GM18951 (cell line): ENCODE measurements at regions of chr5 and their contacts with region 1.

Region 1: GRCh38 chr5:159156426-159157238 is 52.7 kb downstream of the RNF145 start:
- POLR2A ChIP-seq: no peak

Region 2: DNA sequence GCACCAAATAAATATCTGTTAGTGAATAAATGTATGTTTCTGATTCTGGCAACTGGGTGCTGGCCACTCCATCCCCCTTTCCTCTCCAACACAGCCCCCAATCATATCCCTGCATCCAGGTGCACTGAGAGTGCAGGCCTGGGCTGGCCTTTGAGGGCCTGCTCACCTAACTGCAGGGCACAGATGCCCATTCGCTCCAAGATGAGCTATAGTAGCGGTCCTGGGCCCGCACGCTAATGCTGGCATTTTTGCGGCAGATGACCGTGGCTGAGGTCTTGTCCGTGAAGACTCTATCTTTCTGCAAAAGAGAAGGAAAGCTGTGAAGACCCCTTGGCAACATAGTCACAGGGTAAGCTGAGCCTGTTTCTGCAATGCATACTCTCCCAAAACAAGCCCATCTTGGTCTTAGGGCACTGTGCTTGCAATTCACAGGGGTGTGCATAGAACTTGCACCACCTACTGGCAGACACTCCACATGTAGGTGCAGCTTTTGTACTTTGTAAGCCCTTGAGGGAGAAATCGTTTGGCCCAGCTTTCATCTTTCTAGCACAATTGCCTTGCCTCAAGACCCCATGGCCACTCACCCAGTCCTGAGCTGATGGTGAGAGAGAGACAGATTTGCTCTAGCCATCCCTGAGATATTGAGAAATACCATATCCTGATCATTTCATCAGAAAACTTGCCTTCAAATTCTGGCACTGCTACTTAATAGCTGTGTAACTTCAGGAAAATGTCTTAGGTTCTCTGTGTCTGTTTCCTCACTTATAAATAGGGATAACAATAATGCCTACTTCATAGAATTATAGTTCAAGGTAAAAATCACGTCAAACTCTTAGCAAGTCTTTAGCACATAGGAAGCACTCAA is 160.1 kb after region 1 on chr5:
- in situ Hi-C with region 1: loop called (anchors 10 kb)
- POLR2A ChIP-seq: no peak

Region 3: DNA sequence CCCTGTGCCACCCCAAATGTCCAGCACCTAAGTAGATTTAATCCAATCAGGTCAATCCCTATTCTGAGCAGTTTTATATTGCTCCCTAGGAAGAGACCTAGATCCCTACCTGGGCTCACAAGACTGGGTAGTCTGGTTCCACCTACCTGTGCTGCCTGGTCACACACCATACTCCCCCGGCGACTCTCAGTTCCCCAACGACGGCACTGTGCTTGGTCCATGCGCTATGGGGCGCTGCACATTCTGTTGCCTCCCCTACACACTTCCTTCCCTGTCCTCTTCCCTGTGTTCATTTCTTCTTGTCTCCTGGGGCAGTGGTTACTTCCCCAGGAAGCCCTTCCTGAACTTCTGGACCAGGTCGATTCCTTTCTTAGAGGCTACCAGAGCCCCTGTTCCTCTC is 283.6 kb after region 1 on chr5:
- in situ Hi-C with region 1: no loop called
- POLR2A ChIP-seq: no peak

Region 4: DNA sequence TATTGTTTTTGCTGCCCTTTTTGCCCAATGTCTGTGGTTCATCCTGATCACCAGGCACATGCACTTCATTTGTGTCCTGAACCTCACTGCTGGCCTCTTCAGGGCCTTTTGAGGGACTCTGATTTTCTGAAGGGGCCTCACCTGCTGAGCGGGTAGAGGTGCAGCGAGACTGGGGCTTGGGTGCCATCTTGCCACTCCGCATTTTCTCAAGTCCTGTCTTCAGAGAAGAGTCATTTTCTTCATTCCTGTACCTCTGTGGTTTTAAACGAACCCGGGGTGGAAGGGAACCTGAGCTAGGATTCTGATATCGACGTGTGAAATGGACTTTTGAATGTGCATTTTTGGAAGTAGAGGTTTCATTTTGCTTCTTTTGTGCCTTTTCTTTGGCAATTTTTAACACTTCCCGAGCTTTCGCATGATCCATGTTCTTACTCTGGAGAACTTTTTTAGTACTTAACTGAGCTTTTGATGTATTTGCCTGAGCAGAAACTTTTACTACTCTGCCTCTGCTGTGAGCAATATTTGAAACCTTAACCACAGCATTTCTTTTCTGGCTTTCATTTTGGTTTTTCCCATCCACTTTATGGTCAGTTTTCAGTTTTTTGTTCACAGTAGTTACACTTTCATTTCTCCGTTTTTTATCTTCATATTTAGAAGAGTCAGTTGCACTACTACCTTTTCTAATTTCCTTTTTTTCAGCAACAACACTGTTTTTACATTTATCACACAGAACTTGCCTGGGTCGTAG is 936.5 kb after region 1 on chr5:
- in situ Hi-C with region 1: no loop called
- POLR2A ChIP-seq: no peak